Panc1 (cell line): ENCODE measurements at regions of chr4 and their contacts with region 1.

Region 1: GRCh38 chr4:121726642-121727268 is 30.0 kb upstream of the ANXA5 start:
- DNase-seq: peak; percentile 48
- ATAC-seq: peak; percentile 80; the same call in 1 of the 2 replicates
- H3K4me3 ChIP-seq: no peak overlapping the region
- H3K27ac ChIP-seq: no peak overlapping the region
- H3K4me1 ChIP-seq: no peaks in the 10 kb centered on the region
- H3K27me3 ChIP-seq: no peaks in the 10 kb centered on the region
- CTCF ChIP-seq: peak; percentile 74

Region 2: DNA sequence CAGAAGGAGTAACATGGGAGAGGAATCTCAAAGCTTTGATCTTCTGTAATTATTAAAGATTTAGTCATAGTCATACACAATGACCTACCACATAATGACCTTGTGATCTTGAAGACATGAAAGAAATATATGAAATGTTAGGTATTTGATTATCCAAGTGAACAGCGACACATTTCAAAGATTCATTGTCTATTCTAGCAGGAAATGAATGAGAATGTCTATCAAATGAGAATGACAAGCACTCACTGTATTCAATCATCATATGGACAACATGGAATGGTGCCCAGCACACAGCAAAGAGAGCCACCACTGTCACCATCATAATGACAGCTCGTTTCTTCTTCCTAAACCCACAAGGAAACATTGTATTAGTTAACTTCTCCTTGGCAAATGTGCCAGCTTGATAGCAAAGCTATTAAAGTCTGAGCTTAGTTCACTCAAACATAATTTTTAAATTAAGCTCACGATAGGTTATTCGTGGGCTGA is 396.5 kb before region 1 on chr4:
- CTCF ChIA-PET with region 1: interaction called, 10 read pairs
- POLR2A ChIA-PET with region 1: no interaction called
- in situ Hi-C with region 1: no loop called
- intact Hi-C with region 1: no loop called
- DNase-seq: no peak
- ATAC-seq: no peak
- H3K4me3 ChIP-seq: no peak overlapping the region
- H3K27ac ChIP-seq: no peak overlapping the region
- H3K4me1 ChIP-seq: no peaks in the 10 kb centered on the region
- H3K27me3 ChIP-seq: no peaks in the 10 kb centered on the region; the same call in 1 of the 2 replicates
- CTCF ChIP-seq: no peak

Region 3: GRCh38 chr4:121668368-121669162 is 58.2 kb before region 1 on chr4:
- CTCF ChIA-PET with region 1: no interaction called
- POLR2A ChIA-PET with region 1: no interaction called
- in situ Hi-C with region 1: no loop called
- intact Hi-C with region 1: loop called (anchors 5 kb)
- DNase-seq: no peak
- ATAC-seq: no peak
- H3K4me3 ChIP-seq: no peak overlapping the region
- H3K27ac ChIP-seq: no peak overlapping the region
- H3K4me1 ChIP-seq: no peaks in the 10 kb centered on the region
- H3K27me3 ChIP-seq: no peaks in the 10 kb centered on the region
- CTCF ChIP-seq: no peak

Region 4: DNA sequence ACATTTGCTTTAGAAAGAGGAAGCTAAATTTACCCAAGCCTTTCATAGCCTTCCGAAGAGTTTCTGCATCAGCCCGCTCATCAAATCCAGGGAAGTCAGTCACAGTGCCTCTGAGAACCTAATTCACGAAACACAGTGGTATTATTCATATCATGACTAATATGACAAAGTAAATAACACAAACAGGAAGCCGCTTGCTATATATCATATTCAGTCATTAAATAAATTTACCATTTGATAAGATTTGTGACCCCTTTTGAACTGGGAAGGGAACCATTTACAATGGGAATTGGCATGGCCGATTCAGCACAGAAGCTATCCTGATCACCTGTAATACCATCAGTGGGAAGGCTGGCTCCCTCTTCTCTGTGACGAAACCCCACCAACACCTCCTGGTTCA is 40.5 kb before region 1 on chr4:
- CTCF ChIA-PET with region 1: no interaction called
- POLR2A ChIA-PET with region 1: no interaction called
- in situ Hi-C with region 1: no loop called
- intact Hi-C with region 1: loop called (anchors 5 kb)
- DNase-seq: no peak
- ATAC-seq: peak; percentile 81
- H3K4me3 ChIP-seq: no peak overlapping the region
- H3K27ac ChIP-seq: no peak overlapping the region; the same call in 1 of the 2 replicates
- H3K4me1 ChIP-seq: peaks cover 19% of the 10 kb centered on the region
- H3K27me3 ChIP-seq: no peaks in the 10 kb centered on the region
- CTCF ChIP-seq: no peak

Region 5: DNA sequence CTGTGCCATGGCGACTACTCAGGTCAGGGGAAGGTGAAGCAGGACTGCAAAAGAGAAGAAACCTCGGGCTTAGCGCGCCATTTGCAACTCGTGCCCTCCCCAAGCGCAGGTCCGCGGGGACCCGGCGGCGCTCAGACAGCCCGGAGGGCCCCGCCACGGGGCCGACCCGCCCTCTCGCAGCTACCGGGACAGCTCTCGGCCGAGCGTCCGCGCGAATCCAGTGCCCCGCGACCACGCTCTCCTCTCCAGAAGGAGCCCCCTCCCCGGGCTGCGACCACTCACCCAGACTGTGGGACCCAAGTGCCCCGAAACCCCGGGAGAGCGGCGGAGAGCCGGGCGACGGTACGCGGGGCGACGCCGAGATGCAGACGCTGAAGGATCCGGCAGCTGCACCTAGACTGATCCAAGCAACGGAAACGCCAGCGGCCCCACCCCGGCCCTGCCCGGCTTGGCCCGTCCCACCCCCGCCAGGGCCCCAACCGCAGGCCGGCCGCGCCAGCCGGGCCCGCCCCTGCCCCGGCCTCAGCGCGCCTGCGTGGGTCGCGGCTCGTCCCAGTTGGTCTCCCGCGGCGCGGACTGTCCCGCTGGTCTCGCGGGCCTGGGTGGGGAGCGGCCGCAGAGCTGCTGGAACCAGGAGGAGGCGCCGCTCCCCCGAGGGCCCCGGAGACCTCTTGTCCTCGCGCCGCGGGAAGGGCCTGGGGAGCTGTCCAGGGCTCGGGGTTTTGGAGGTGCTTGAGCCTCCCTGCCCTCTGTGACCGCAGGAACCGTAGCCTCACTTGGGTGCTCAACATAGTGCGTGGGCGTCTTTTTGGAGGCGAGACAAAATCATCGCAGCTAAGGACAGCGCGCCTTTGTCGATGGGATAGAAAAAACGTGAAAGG is 29.9 kb before region 1 on chr4 and contains the start of gene ANXA5:
- CTCF ChIA-PET with region 1: interaction called, 10 read pairs
- POLR2A ChIA-PET with region 1: no interaction called
- in situ Hi-C with region 1: no loop called
- intact Hi-C with region 1: loop called (anchors 1 kb)
- DNase-seq: no peak
- ATAC-seq: peak; percentile 99
- H3K4me3 ChIP-seq: peak within 1 kb of the TSS; percentile 84
- H3K27ac ChIP-seq: peak within 1 kb of the TSS; percentile 87
- H3K4me1 ChIP-seq: peaks cover 19% of the 10 kb centered on the region
- H3K27me3 ChIP-seq: no peaks in the 10 kb centered on the region
- CTCF ChIP-seq: peak; percentile 51
- total RNA-seq, gene ANXA5: 222 TPM